Calu3 (cell line): ENCODE measurements at regions of chr7 and their contacts with region 1.

Region 1: GRCh38 chr7:127253281-127254162 is 781 bp upstream of the GRM8 start:
- DNase-seq: peak; percentile 76
- H3K4me3 Mint-ChIP-seq: peak overlapping the region; percentile 84
- H3K27ac Mint-ChIP-seq: no peak overlapping the region
- H3K4me1 Mint-ChIP-seq: peaks cover 7% of the 10 kb centered on the region
- H3K27me3 Mint-ChIP-seq: peaks cover 87% of the 10 kb centered on the region
- CTCF ChIP-seq: peak; percentile 87

Region 2: GRCh38 chr7:126803060-126803665 is 450.4 kb before region 1 on chr7:
- CTCF ChIA-PET with region 1: interaction called, 10 read pairs
- intact Hi-C with region 1: loop called (anchors 1 kb)
- DNase-seq: peak; percentile 73
- H3K4me3 Mint-ChIP-seq: no peak overlapping the region
- H3K27ac Mint-ChIP-seq: no peak overlapping the region
- H3K4me1 Mint-ChIP-seq: no peaks in the 10 kb centered on the region
- H3K27me3 Mint-ChIP-seq: peaks cover 32% of the 10 kb centered on the region
- CTCF ChIP-seq: peak; percentile 49

Region 3: DNA sequence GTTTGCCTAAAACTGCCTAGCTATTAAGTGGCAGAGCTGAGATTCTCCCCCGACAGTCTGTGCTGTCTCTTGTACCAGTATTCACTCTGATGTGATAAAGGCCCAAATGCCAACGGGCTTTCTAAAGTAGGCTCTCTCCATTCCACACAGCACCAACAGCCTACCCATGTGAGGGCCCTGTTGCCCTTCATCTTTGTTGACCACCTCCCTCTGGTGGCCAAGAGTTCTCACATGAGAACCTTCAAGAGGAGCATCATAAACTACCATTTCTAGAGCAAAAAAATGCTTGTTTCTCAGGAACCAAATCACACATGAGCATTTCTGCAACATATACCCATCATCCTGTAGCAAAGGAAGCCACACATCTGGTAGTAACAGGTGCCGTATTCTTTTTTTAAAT is 186.5 kb before region 1 on chr7:
- CTCF ChIA-PET with region 1: no interaction called
- intact Hi-C with region 1: loop called (anchors 5 kb)
- DNase-seq: peak; percentile 57
- H3K4me3 Mint-ChIP-seq: no peak overlapping the region
- H3K27ac Mint-ChIP-seq: no peak overlapping the region
- H3K4me1 Mint-ChIP-seq: no peaks in the 10 kb centered on the region
- H3K27me3 Mint-ChIP-seq: peaks cover 14% of the 10 kb centered on the region
- CTCF ChIP-seq: peak; percentile 48

Region 4: DNA sequence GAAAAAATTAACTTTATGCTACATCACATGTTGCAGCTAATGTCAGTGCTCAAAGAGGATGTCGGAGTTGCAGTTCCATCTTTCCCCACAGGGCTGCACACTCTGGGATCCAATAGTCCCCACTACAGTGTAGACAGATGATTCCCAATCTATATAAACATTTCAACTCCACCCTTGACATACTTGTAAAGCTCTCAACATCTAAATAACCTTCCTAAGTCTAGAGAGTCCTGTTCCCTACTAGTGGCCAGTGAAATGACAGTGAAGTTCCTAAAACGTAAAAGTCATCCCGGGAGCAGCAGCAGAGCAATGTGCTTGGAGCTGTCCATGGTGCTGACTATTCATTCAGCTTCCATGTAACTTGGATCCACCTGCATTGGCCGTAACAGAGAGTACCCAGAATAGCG is 145.9 kb before region 1 on chr7:
- CTCF ChIA-PET with region 1: interaction called, 11 read pairs
- intact Hi-C with region 1: loop called (anchors 5 kb)
- DNase-seq: peak; percentile 62
- H3K4me3 Mint-ChIP-seq: no peak overlapping the region
- H3K27ac Mint-ChIP-seq: no peak overlapping the region
- H3K4me1 Mint-ChIP-seq: no peaks in the 10 kb centered on the region
- H3K27me3 Mint-ChIP-seq: peaks cover 48% of the 10 kb centered on the region
- CTCF ChIP-seq: peak; percentile 63

Region 5: GRCh38 chr7:127514499-127514898 is 261.0 kb after region 1 on chr7:
- CTCF ChIA-PET with region 1: no interaction called
- intact Hi-C with region 1: loop called (anchors 5 kb)
- DNase-seq: peak; percentile 13
- H3K4me3 Mint-ChIP-seq: no peak overlapping the region
- H3K27ac Mint-ChIP-seq: no peak overlapping the region
- H3K4me1 Mint-ChIP-seq: no peaks in the 10 kb centered on the region
- H3K27me3 Mint-ChIP-seq: peaks cover 74% of the 10 kb centered on the region
- CTCF ChIP-seq: no peak